ENCODE measurements at regions of chr2 and their contacts with region 1.

Region 1: GRCh38 chr2:20438334-20439192 is 8.3 kb upstream of the RHOB start:
- DNase-seq: peak; percentile 66
- H3K4me3 ChIP-seq: peak overlapping the region in 1 of 3 experiments; percentile 30
- H3K27ac ChIP-seq: peak overlapping the region; percentile 54
- H3K4me1 ChIP-seq: peaks cover 17% of the 10 kb centered on the region
- H3K27me3 ChIP-seq: no peaks in the 10 kb centered on the region
- CTCF ChIP-seq: no peak
- POLR2A ChIP-seq: no peak

Region 2: DNA sequence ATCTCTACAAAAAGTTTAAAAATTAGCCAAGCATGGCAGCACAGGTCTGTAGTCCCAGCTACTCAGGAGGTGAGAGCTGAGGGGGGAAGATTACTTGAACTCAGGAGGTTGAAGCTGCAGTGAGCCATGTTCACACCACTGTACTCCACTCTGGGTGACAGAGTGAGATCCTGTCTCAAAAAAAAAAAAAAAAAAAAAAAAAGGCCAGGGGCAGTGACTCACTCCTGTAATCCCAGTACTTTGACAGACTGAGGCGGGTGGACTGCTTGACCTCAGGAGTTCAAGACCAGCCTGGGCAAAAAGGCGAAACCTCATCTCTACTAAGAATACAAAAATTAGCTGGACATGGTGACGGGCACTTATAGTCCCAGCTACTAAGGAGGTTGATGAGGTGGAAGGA is 124.9 kb before region 1 on chr2:
- CTCF ChIA-PET with region 1: no interaction called
- POLR2A ChIA-PET with region 1: no interaction called
- dilution Hi-C with region 1: no loop called
- intact Hi-C with region 1: no loop called
- DNase-seq: peak; percentile 24
- H3K4me3 ChIP-seq: no peak overlapping the region
- H3K27ac ChIP-seq: peak overlapping the region; percentile 84
- H3K4me1 ChIP-seq: peaks cover 35% of the 10 kb centered on the region
- H3K27me3 ChIP-seq: no peaks in the 10 kb centered on the region
- CTCF ChIP-seq: no peak
- POLR2A ChIP-seq: no peak

Region 3: DNA sequence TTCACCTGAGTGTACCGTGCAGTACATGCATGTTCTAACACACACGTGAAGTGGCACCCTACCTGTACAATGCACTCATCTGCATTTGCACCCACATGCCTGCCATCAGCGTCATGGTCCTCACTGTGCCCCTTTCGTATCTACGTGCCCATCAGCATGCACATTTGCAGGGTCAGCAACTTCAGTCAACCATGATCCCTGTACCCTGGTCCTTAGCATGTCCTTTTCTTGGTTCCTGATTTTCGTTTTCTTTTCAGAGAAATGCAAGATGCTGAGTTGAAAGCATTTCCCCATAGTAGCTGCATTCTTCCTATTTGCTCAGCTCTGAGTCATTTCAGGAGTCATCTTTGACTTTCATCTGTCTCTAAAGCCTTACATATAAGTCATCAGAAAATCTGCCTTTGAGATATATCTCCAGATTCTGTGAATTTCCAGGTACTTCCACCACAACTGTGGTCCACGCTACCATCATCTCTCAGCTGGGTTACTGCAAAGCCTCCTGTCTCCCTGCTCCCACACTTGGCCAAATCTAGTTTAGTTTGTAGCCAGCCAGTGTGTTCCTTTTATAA is 73.2 kb before region 1 on chr2:
- CTCF ChIA-PET with region 1: no interaction called
- POLR2A ChIA-PET with region 1: no interaction called
- dilution Hi-C with region 1: no loop called
- intact Hi-C with region 1: no loop called
- DNase-seq: no peak
- H3K4me3 ChIP-seq: no peak overlapping the region
- H3K27ac ChIP-seq: no peak overlapping the region
- H3K4me1 ChIP-seq: no peaks in the 10 kb centered on the region
- H3K27me3 ChIP-seq: peaks cover 17 to 21% of the 10 kb centered on the region in 2 experiments
- CTCF ChIP-seq: no peak
- POLR2A ChIP-seq: no peak

Region 4: DNA sequence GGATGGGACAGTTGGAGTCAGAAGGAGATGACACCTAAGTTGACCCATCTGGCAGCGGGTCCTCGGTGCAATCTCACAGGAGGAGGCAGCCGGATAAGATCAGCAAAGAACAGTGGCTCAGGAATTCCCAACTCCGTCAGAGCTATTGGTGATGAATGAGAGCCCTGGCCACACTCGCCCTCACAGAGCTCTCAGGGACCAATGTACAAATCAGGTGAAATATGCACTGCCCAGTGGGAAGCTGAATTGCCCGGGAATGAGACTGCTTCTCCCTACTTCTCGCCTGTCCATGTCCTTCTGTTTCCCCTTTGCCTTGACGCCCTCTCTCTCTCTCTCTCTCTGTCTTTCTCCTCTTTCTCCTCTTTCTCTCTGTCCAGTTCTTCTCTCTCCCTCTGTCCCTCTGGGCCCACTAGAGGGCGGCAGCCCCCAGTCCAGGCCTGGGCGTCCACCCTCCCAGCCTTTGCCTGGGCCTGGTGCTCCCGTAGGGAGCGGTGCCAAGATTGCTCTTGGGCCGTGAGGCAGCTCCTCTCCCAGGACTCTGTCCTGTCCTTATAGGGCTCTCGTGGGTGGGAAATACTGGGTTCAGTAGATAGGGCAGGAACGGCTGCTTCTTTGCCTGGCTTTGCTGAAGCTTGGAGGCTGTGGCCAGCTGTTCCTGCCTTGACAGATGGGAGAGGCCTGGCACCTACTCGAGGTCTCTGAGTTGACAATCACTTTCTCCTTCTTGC is 59.6 kb before region 1 on chr2:
- CTCF ChIA-PET with region 1: interaction called, 27 read pairs
- POLR2A ChIA-PET with region 1: no interaction called
- dilution Hi-C with region 1: no loop called
- intact Hi-C with region 1: loop called (anchors 5 kb)
- DNase-seq: peak; percentile 78
- H3K4me3 ChIP-seq: no peak overlapping the region
- H3K27ac ChIP-seq: no peak overlapping the region
- H3K4me1 ChIP-seq: no peaks in the 10 kb centered on the region
- H3K27me3 ChIP-seq: peaks cover 6 to 9% of the 10 kb centered on the region in 2 experiments
- CTCF ChIP-seq: peak; percentile 87 to 89
- POLR2A ChIP-seq: no peak

Region 5: GRCh38 chr2:20766798-20767644 is 328.5 kb after region 1 on chr2:
- CTCF ChIA-PET with region 1: no interaction called
- POLR2A ChIA-PET with region 1: no interaction called
- dilution Hi-C with region 1: no loop called
- intact Hi-C with region 1: no loop called
- DNase-seq: no peak
- H3K4me3 ChIP-seq: no peak overlapping the region
- H3K27ac ChIP-seq: no peak overlapping the region
- H3K4me1 ChIP-seq: no peaks in the 10 kb centered on the region
- H3K27me3 ChIP-seq: no peaks in the 10 kb centered on the region
- CTCF ChIP-seq: no peak
- POLR2A ChIP-seq: no peak

Measured in endothelial cell of umbilical vein (primary cell).